PC-9 (cell line): ENCODE measurements at regions of chr5 and their contacts with region 1.

Region 1: DNA sequence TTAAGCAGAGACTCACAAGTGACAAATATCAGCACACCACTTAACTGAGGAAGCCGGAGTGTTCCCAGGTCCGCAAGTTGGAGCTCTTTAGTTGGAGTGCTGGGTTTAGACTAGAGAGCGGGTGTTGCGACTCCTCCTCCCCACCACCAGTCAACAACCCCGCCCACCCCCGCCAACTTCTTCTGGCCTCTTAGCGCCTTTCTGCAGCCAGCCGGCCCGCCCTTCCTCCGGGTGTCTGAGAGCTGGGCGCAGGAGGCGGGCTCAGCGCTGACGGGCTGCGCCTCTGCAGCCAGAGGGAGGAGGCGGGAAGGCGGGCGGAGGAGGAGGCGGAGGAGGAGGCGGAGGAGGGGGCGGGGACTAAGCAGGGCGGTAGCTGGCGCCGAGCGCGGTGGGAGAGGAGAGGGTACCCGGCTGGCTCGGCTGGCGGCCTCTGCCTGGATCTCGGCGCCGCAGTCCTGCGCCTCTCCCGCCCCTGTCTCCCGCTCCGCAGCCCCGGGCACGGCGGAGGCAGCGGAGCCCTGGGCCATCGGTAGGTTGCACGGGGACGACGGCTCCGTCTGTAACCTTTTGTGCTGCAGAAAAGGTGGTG is at the start of gene MACIR:
- DNase-seq: peak; percentile 93 to 97
- H3K4me3 ChIP-seq: peak within 1 kb of the TSS; percentile 90
- H3K27ac ChIP-seq: peak within 1 kb of the TSS; percentile 73
- H3K4me1 ChIP-seq: peaks cover 34% of the 10 kb centered on the region
- H3K27me3 ChIP-seq: no peaks in the 10 kb centered on the region
- CTCF ChIP-seq: no peak
- total RNA-seq, gene MACIR: 21.0 and 28.4 TPM in 2 replicates

Region 2: GRCh38 chr5:102755686-102756371 is 502.6 kb before region 1 on chr5:
- CTCF ChIA-PET with region 1: no interaction called
- POLR2A ChIA-PET with region 1: interaction called, 11 read pairs
- intact Hi-C with region 1: no loop called
- DNase-seq: peak; percentile 72 to 85
- H3K4me3 ChIP-seq: peak overlapping the region; percentile 86
- H3K27ac ChIP-seq: peak overlapping the region; percentile 77
- H3K4me1 ChIP-seq: peaks cover 15% of the 10 kb centered on the region; the same call in 1 of the 2 replicates
- H3K27me3 ChIP-seq: no peaks in the 10 kb centered on the region
- CTCF ChIP-seq: no peak

Region 3: GRCh38 chr5:103272377-103272776 is 13.9 kb after region 1 on chr5:
- CTCF ChIA-PET with region 1: no interaction called
- POLR2A ChIA-PET with region 1: interaction called, 29 read pairs
- intact Hi-C with region 1: no loop called
- DNase-seq: no peak
- H3K4me3 ChIP-seq: no peak overlapping the region
- H3K27ac ChIP-seq: peak overlapping the region; percentile 72
- H3K4me1 ChIP-seq: peaks cover 39% of the 10 kb centered on the region
- H3K27me3 ChIP-seq: no peaks in the 10 kb centered on the region
- CTCF ChIP-seq: no peak

Region 4: DNA sequence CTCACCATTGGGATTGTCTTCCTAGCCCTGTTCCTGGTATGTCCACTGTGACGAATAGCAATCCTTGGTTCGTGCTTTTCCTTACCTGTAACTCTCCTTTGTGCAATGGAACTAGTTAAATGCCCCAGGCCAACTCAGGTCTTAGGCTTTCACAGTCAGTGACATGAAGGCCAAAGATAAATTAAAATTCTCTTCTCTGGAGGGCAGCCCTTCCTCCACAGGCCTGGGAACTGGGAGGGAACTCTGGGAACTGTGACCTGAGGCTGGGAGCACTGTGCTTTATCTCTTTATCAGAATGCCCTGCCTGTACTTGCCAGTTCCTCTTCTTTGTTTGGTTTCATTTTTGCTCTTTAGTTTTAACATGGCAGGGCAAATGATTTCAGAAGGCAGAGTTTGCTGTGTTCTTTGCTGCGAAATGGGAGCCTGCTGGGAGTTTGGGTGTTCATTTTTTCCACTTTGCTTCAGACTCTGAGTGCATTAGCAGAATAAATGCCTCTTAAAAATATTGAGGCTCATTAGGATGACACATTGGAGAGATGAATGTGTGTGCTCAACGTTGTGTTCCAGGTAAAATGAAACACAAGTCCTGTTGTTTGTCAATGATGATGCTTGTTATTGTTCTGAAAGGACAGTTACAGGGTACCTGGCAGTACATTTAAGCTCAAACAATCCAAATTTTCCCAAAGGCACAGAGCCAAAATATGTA is 186.0 kb after region 1 on chr5:
- CTCF ChIA-PET with region 1: interaction called, 14 read pairs
- POLR2A ChIA-PET with region 1: no interaction called
- intact Hi-C with region 1: no loop called
- DNase-seq: peak; percentile 70 to 82
- H3K4me3 ChIP-seq: peak overlapping the region; percentile 29; the same call in 1 of the 2 replicates
- H3K27ac ChIP-seq: peak overlapping the region; percentile 75
- H3K4me1 ChIP-seq: peaks cover 30% of the 10 kb centered on the region
- H3K27me3 ChIP-seq: no peaks in the 10 kb centered on the region
- CTCF ChIP-seq: no peak

Region 5: DNA sequence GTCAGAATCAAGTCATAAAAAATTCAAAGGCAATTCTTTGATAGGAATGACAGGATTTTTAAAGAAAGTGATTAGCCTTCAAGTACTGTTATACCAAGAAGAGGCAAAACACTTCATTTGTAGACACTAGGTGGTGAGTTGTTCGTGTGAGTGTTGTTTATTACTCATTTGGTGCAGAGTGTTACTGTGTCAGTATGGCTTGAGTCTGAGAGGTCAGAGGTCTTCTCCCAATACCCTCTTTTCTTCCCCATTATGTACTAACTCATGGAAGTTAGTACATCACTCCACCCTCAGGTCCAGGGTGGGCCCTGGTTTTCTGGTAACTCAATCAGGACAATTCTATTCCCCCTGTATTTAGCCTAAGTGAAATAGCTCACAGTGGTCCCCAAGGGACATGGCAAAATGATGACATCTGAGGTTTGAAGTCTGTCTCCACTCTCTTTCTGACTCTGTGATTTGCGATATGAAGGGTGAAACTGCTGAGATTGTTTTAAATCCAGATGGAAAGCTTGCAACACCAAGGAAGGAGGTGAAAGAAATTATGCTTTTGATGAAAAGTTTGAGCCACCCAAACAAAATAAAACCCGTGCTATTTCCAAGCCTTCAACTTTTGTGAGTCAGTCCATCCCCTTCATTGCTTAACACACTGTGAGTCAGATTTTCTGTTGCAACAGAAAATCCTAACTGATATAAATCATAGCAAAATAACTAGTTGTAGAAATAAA is 247.3 kb after region 1 on chr5:
- CTCF ChIA-PET with region 1: no interaction called
- POLR2A ChIA-PET with region 1: interaction called, 10 read pairs
- intact Hi-C with region 1: no loop called
- DNase-seq: no peak
- H3K4me3 ChIP-seq: no peak overlapping the region
- H3K27ac ChIP-seq: no peak overlapping the region
- H3K4me1 ChIP-seq: peaks cover 4% of the 10 kb centered on the region; the same call in 1 of the 2 replicates
- H3K27me3 ChIP-seq: no peaks in the 10 kb centered on the region
- CTCF ChIP-seq: no peak